Lower leg skin (tissue), 4 donors: ENCODE measurements at regions of chr9 and their contacts with region 1.

Region 1: DNA sequence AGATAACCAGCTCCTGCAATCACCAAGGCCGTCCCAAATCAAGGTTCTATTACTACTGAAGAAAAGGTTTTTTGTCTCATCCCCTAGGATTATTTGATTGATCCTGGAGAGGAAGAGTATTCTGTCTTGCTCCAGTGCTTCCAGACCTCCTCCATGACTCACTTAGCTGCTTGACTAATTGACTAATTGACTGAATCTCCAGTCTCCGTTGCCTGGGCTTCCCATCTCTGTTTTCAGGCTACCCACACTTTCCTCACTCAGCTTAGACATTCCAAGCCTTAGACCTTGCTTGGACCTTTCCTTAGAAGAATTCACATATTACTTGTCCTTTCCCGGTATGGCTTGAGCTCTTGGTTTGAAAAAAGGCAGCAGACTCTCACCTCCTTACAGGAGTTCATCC is 60.6 kb downstream of the FRMD3 start:
- DNase-seq: no peak
- H3K4me3 ChIP-seq: no peak overlapping the region
- CTCF ChIP-seq: no peak
- POLR2A ChIP-seq: no peak

Region 2: GRCh38 chr9:83508067-83508466 is 30.5 kb after region 1 on chr9:
- intact Hi-C with region 1: no loop called
- DNase-seq: no peak
- H3K4me3 ChIP-seq: no peak overlapping the region
- CTCF ChIP-seq: no peak
- POLR2A ChIP-seq: no peak

Region 3: GRCh38 chr9:84070590-84070989 is 593.0 kb after region 1 on chr9:
- intact Hi-C with region 1: loop called (anchors 5 kb)
- DNase-seq: no peak
- H3K4me3 ChIP-seq: no peak overlapping the region
- CTCF ChIP-seq: no peak
- POLR2A ChIP-seq: no peak